ENCODE measurements at regions of chr16 and their contacts with region 1.

Region 1: GRCh38 chr16:72832621-72833248 is 215.2 kb downstream of the ZFHX3 start:
- DNase-seq: no peak
- H3K4me3 ChIP-seq: no peak overlapping the region
- CTCF ChIP-seq: peak; percentile 98

Region 2: DNA sequence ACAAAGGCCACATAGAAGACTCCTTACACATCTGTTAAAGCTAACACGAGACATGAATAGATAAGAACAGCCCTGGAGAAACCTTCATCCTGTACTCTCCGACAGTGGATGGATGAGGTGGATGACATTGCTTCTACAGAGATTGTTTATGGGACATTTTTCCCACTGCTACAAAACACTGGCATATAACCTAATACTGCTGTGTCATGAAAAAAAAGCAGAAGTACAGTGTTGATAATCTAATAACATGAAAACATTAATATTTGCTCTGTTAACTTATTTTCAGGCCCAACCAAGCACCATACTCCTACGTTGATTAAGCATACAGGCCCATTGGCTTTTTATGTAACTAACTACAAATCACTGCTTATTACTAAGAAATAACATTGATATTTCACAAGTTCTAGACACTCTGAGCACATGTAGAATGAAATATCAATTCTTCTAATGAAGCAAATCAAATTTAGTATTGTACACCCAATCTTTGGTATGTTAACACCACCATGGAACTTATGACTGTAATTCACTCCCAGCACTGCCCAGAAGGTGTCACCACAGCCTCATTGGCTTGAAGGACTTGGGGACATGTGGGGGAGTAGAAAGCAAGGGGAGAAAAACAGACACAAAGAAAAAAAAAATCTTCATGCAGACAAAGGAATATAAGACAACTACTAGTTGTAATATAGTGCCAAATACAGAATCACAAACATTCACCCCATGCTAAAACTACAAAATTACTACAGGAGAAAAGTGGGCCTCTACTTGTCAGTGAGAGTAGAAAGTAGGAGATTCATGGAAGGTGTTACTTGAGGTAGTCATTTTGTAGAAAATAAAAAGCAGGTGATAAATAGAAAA is 330.8 kb before region 1 on chr16:
- CTCF ChIA-PET with region 1: interaction called, 16 read pairs
- POLR2A ChIA-PET with region 1: no interaction called
- DNase-seq: peak; percentile 19
- H3K4me3 ChIP-seq: no peak overlapping the region
- CTCF ChIP-seq: peak; percentile 82

Region 3: GRCh38 chr16:72847187-72848027 is 14.7 kb after region 1 on chr16:
- CTCF ChIA-PET with region 1: interaction called, 123 read pairs
- POLR2A ChIA-PET with region 1: no interaction called
- DNase-seq: no peak
- H3K4me3 ChIP-seq: no peak overlapping the region
- CTCF ChIP-seq: peak; percentile 70

Region 4: GRCh38 chr16:72894293-72895151 is 61.8 kb after region 1 on chr16:
- CTCF ChIA-PET with region 1: interaction called, 16 read pairs
- POLR2A ChIA-PET with region 1: no interaction called
- DNase-seq: no peak
- H3K4me3 ChIP-seq: no peak overlapping the region
- CTCF ChIP-seq: no peak

Region 5: DNA sequence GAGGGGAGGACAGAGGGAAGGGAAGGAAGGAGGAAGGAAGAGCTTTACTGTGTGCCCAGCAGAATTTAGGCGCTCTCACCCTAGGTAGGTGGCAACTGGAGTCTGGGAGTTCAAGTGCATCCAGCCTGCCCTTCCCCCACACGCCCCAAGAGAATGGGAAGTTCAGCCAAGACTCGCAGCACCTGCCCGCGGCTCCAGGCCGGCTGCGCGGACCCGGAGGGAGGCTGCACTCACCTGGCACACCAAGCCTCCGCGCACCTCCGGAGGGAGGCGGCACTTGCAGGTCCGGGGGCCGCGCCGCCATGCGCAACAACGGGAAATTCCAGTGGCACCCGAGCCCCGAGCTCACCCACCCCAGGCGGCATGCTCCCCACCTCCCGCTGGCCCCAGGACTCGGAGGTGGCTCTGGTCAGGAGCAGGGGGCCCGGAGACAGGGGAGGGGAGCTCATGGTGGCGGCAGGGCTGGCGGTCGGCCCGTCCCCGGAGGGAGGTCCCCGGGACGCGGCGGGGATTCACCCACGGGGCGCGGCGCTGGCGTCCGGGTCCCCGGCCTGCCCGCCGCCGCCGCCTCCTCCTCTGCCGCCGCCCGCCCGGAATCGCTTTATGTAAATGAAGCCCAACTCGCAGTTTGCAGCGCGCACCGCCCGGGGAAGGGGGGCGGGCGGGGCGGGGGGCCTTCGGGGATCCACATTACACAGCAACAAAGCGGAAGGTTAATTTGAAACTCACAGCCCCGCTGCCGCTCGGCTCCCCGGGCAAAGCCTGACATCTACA is 215.0 kb after region 1 on chr16 and contains the start of gene ZFHX3:
- CTCF ChIA-PET with region 1: interaction called, 32 read pairs
- POLR2A ChIA-PET with region 1: no interaction called
- DNase-seq: no peak
- H3K4me3 ChIP-seq: peak within 1 kb of the TSS; percentile 68
- CTCF ChIP-seq: no peak

Region 6: GRCh38 chr16:73878611-73879010 is 1045.9 kb after region 1 on chr16:
- CTCF ChIA-PET with region 1: interaction called, 10 read pairs
- POLR2A ChIA-PET with region 1: no interaction called
- DNase-seq: peak; percentile 40
- H3K4me3 ChIP-seq: no peak overlapping the region
- CTCF ChIP-seq: peak; percentile 52